Activated CD8-positive, alpha-beta T cell treated with anti-CD3 and anti-CD28 coated beads, Interleukin-2, amount 10 ng/mL, durations not matched to agents 7 days and 5 days (primary cell): ENCODE measurements at regions of chr4 and their contacts with region 1.

Region 1: DNA sequence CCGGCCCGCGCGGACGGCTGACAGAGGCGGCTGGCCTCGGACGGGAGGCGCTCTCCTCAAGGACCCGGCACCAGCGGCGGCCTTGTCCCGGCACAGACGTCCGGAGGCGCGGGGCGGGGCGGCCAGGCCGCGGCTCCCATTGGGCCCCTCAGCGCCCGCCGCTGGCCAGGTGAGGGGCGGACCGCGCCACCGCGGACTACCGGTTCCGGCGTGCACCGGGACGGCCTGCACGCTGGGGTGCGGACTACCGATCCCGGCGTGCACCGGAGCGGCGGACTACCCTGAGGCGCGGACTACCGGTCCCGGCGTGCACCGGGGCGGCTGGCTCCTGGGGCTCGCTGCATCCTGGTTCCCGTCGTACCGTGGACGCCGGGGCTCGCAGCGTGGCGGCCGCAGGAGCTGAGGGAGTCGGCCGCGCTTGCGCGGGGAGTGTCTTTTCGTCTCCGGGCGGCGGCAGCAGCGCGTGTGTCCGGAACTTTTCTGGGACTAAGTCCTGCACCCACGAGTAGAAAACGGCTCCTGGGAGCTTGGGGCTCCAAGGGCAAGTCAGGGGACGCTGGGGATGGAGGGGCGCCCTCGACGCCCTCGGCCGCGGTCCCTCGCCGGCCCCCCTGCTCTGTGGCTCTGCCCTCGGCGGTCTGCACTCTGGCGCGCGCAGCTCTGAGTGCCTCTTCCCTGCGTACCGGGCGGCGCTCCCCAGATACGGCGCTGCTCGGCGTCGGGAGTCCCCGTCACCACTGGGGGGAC is at the start of gene LETM1:
- DNase-seq: peak; percentile 94
- ATAC-seq: peak; percentile 92
- H3K4me3 Mint-ChIP-seq: peak within 1 kb of the TSS; percentile 81
- H3K27ac Mint-ChIP-seq: peak within 1 kb of the TSS; percentile 84
- H3K4me1 Mint-ChIP-seq: peaks cover 50% of the 10 kb centered on the region
- H3K27me3 Mint-ChIP-seq: no peaks in the 10 kb centered on the region
- total RNA-seq, gene LETM1: 56.6 to 58.9 TPM

Region 2: DNA sequence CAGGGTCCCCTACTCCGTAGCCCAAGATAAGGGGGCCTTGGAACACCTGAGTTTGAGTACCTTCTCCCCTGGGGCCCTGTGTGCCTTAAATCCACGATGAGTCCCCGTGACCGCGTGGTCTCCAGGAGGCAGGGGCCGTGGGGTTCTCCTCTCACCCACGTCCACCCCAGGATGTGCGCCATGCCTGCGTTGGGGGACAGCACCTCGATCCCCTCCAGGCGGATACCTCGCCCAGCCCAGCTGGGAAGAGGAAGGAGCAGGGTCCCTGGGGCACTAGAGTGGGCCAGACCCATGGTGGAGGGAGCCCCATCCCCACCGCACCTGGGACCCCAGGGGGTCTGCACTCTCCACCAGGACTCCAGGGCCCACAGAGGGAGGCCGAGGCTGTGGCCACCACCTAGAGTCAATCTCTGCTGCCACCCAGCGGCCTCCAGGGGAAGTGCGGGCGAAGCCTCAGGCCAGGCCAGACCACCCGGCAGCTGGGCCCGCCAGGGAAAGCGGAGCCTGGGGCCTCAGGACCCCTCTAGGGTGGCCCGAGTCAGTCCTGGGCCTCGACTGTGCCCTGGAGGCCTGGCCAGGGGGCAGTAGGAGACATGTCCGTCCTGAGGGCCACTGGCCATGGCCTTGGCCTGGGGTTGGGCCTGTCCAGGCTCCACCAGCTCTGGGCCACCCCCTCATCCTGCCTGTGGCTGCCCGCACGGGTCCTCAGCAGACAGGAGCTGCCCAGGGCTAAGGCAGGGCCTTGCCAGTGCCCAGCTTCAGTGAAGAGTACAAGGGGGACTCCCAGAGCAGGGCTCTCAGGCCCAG is 227.1 kb before region 1 on chr4:
- CTCF ChIA-PET with region 1: no interaction called
- POLR2A ChIA-PET with region 1: no interaction called
- DNase-seq: peak; percentile 75
- ATAC-seq: peak; percentile 85
- H3K4me3 Mint-ChIP-seq: no peak overlapping the region
- H3K27ac Mint-ChIP-seq: no peak overlapping the region
- H3K4me1 Mint-ChIP-seq: no peaks in the 10 kb centered on the region
- H3K27me3 Mint-ChIP-seq: no peaks in the 10 kb centered on the region

Region 3: DNA sequence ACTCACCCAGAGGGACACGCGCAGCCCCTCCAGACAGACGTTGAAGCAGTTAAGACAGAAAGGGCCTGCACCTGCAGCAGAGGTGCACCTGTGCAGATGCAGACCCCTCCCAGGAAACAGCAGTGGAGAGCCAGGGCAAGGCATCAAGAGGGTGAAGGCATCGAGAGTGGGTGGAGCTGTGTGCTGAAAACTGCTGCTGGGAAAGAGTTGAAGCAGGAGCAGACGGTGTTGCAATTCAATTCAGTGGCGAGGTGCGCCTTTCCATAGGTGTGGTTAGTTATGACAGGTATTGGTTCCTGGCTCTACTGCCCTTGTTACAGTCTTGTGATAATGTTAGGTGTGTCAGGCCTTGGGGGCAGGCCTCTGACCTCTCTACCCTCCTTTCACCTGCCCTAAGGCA is 16.9 kb before region 1 on chr4:
- CTCF ChIA-PET with region 1: no interaction called
- POLR2A ChIA-PET with region 1: no interaction called
- DNase-seq: no peak
- ATAC-seq: no peak
- H3K4me3 Mint-ChIP-seq: no peak overlapping the region
- H3K27ac Mint-ChIP-seq: no peak overlapping the region
- H3K4me1 Mint-ChIP-seq: peaks cover 16% of the 10 kb centered on the region
- H3K27me3 Mint-ChIP-seq: no peaks in the 10 kb centered on the region

Region 4: DNA sequence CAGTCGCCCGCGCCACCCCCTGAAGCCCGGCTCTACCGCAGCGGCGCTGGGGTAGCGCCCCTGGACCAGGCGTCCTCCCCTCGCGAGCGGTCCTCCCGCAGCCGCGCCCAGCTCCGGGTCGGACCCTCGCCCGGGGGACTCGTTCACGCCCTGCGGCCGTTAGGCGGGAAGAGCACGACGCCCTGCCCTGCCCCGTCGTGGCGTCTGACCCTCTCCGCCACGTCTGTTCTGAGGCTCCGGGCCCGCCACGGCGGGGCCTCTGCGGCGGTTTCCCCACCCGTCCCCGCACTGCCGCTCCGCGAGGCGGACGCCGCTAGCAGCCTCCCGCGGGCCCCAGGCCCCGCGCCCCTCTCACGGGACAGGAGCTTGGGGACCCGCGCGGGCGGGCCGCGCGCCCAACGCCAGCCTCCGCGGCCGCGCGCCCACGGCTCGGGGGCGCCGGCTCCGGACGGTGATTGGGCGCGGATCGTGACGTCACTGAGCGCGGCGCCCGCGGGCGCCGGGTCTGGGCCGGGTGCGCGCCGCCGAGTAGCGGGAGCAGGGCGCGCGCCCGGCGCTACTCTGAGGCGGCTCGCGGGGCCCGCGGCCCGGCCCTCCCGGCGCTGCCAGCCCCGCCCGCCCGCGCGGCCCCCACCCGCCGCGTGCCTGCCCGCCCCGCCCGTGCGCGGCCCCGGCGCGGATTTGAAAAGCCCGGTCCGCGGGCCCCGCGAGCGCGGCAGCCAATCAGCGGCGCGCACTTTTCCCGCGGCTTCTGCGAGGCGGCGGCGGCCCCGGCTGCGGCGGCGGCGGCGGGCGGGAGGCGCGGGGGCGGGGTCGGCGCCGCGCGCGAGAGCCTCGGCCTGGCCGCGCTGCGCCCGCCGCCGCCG is 14.6 kb after region 1 on chr4 and contains the start of gene NSD2:
- CTCF ChIA-PET with region 1: interaction called, 6 read pairs
- POLR2A ChIA-PET with region 1: interaction called, 33 read pairs
- DNase-seq: peak; percentile 91
- ATAC-seq: peak; percentile 65
- H3K4me3 Mint-ChIP-seq: peak within 1 kb of the TSS; percentile 90
- H3K27ac Mint-ChIP-seq: peak within 1 kb of the TSS; percentile 99
- H3K4me1 Mint-ChIP-seq: peaks cover 39% of the 10 kb centered on the region
- H3K27me3 Mint-ChIP-seq: no peaks in the 10 kb centered on the region
- total RNA-seq, gene NSD2: 287 to 290 TPM